B cell (primary cell): ENCODE measurements at regions of chr4 and their contacts with region 1.

Region 1: GRCh38 chr4:121869841-121870656 is at the start of gene BBS7:
- DNase-seq: peak; percentile 96
- ATAC-seq: peak; percentile 98
- H3K4me3 ChIP-seq: peak within 1 kb of the TSS; percentile 70 to 91 (median 80)
- H3K4me3 Mint-ChIP-seq: peak within 1 kb of the TSS; percentile 98
- H3K27ac ChIP-seq: peak within 1 kb of the TSS; percentile 45 to 80
- H3K27ac Mint-ChIP-seq: peak within 1 kb of the TSS; percentile 88
- H3K4me1 ChIP-seq: peaks cover 0 to 10% of the 10 kb centered on the region in 2 donors
- H3K4me1 Mint-ChIP-seq: peaks cover 17% of the 10 kb centered on the region
- H3K27me3 ChIP-seq: peaks cover 0 to 17% (median 4%) of the 10 kb centered on the region in 4 experiments
- H3K27me3 Mint-ChIP-seq: peaks cover 14% of the 10 kb centered on the region
- CTCF ChIP-seq: no peak
- total RNA-seq, gene BBS7: 9.1 and 11.9 TPM in 2 replicates

Region 2: GRCh38 chr4:121614101-121614500 is 255.9 kb before region 1 on chr4:
- CTCF ChIA-PET with region 1: no interaction called
- POLR2A ChIA-PET with region 1: no interaction called
- intact Hi-C with region 1: no loop called
- DNase-seq: no peak
- ATAC-seq: no peak
- H3K4me3 ChIP-seq: no peak overlapping the region
- H3K4me3 Mint-ChIP-seq: no peak overlapping the region
- H3K27ac ChIP-seq: no peak overlapping the region
- H3K27ac Mint-ChIP-seq: no peak overlapping the region
- H3K4me1 ChIP-seq: no peaks in the 10 kb centered on the region
- H3K4me1 Mint-ChIP-seq: no peaks in the 10 kb centered on the region
- H3K27me3 ChIP-seq: no peaks in the 10 kb centered on the region
- H3K27me3 Mint-ChIP-seq: peaks cover 16% of the 10 kb centered on the region
- CTCF ChIP-seq: no peak

Region 3: GRCh38 chr4:121696581-121697461 is 173.2 kb before region 1 on chr4 and contains the start of gene ANXA5:
- CTCF ChIA-PET with region 1: no interaction called
- POLR2A ChIA-PET with region 1: no interaction called
- intact Hi-C with region 1: loop called (anchors 1 kb)
- DNase-seq: peak; percentile 78
- ATAC-seq: peak; percentile 90
- H3K4me3 ChIP-seq: peak within 1 kb of the TSS; percentile 73 to 85 (median 79)
- H3K4me3 Mint-ChIP-seq: peak within 1 kb of the TSS; percentile 99
- H3K27ac ChIP-seq: peak within 1 kb of the TSS; percentile 39 to 69
- H3K27ac Mint-ChIP-seq: peak within 1 kb of the TSS; percentile 98
- H3K4me1 ChIP-seq: peaks cover 13 to 14% of the 10 kb centered on the region in 2 donors
- H3K4me1 Mint-ChIP-seq: peaks cover 36% of the 10 kb centered on the region
- H3K27me3 ChIP-seq: peaks cover 0 to 12% (median 0%) of the 10 kb centered on the region in 4 experiments
- H3K27me3 Mint-ChIP-seq: peaks cover 12% of the 10 kb centered on the region
- CTCF ChIP-seq: no peak
- total RNA-seq, gene ANXA5: 66.5 and 67.8 TPM in 2 replicates

Region 4: GRCh38 chr4:121800961-121801714 is 68.9 kb before region 1 on chr4 and contains the start of gene EXOSC9:
- CTCF ChIA-PET with region 1: no interaction called
- POLR2A ChIA-PET with region 1: no interaction called
- intact Hi-C with region 1: loop called (anchors 1 kb)
- DNase-seq: peak; percentile 97
- ATAC-seq: peak; percentile 76
- H3K4me3 ChIP-seq: peak within 1 kb of the TSS; percentile 64 to 99 (median 93)
- H3K4me3 Mint-ChIP-seq: peak within 1 kb of the TSS; percentile 96
- H3K27ac ChIP-seq: peak within 1 kb of the TSS; percentile 88 to 97
- H3K27ac Mint-ChIP-seq: peak within 1 kb of the TSS; percentile 98
- H3K4me1 ChIP-seq: peaks cover 8 to 15% of the 10 kb centered on the region in 2 donors
- H3K4me1 Mint-ChIP-seq: peaks cover 39% of the 10 kb centered on the region
- H3K27me3 ChIP-seq: no peaks in the 10 kb centered on the region
- H3K27me3 Mint-ChIP-seq: no peaks in the 10 kb centered on the region
- CTCF ChIP-seq: no peak
- total RNA-seq, gene EXOSC9: 35.5 and 42.1 TPM in 2 replicates

Region 5: DNA sequence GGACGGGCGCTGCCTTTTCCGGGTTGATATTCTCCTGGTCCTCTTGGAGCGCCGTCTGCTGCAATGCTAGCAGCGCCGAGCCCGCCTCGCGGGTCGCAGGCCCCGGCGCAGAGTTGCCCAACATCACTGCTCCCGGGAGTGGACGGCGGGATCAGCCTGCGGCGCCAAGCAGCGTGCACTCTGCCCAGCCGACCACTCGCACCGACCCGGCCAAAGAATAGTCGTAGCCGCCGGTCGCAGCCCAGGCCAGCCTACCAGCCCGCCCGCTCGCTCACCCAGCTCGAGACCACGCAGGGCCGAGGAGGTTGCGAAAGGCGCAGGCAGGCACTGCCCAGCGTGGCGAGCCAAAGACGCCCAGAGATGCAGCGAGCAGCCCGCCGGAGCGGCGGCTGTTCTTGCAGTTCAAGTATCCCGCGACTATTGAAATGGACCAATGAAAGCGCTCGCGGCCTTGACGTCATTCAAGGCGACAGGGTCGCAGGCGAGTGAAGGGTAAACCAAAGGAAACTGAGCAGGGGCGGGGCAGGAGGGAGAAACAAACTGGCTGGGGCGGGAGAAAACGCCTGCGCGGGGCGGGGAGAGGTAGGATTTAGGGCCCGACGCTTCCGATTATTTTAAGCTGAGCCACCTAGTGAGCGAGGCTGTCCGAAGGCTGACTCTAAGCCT is 46.4 kb before region 1 on chr4 and contains the start of gene CCNA2:
- CTCF ChIA-PET with region 1: interaction called, 5 read pairs
- POLR2A ChIA-PET with region 1: no interaction called
- intact Hi-C with region 1: loop called (anchors 1 kb)
- DNase-seq: peak; percentile 94
- ATAC-seq: peak; percentile 99
- H3K4me3 ChIP-seq: peak within 1 kb of the TSS; percentile 46 to 96 (median 74)
- H3K4me3 Mint-ChIP-seq: peak within 1 kb of the TSS; percentile 90
- H3K27ac ChIP-seq: peak within 1 kb of the TSS; percentile 62 to 82
- H3K27ac Mint-ChIP-seq: peak within 1 kb of the TSS; percentile 87
- H3K4me1 ChIP-seq: peaks cover 8 to 10% of the 10 kb centered on the region in 2 donors
- H3K4me1 Mint-ChIP-seq: peaks cover 16% of the 10 kb centered on the region
- H3K27me3 ChIP-seq: no peaks in the 10 kb centered on the region
- H3K27me3 Mint-ChIP-seq: no peaks in the 10 kb centered on the region
- CTCF ChIP-seq: no peak
- total RNA-seq, gene CCNA2: 0.94 and 1.8 TPM in 2 replicates

Region 6: GRCh38 chr4:121851354-121851753 is 18.7 kb before region 1 on chr4:
- CTCF ChIA-PET with region 1: no interaction called
- POLR2A ChIA-PET with region 1: no interaction called
- intact Hi-C with region 1: no loop called
- DNase-seq: no peak
- ATAC-seq: no peak
- H3K4me3 ChIP-seq: no peak overlapping the region
- H3K4me3 Mint-ChIP-seq: no peak overlapping the region
- H3K27ac ChIP-seq: no peak overlapping the region
- H3K27ac Mint-ChIP-seq: no peak overlapping the region
- H3K4me1 ChIP-seq: no peaks in the 10 kb centered on the region
- H3K4me1 Mint-ChIP-seq: no peaks in the 10 kb centered on the region
- H3K27me3 ChIP-seq: no peaks in the 10 kb centered on the region
- H3K27me3 Mint-ChIP-seq: no peaks in the 10 kb centered on the region
- CTCF ChIP-seq: no peak

Region 7: GRCh38 chr4:122151982-122152710 is 282.1 kb after region 1 on chr4 and contains the start of gene BLTP1:
- CTCF ChIA-PET with region 1: no interaction called
- POLR2A ChIA-PET with region 1: no interaction called
- intact Hi-C with region 1: loop called (anchors 1 kb)
- DNase-seq: peak; percentile 91
- ATAC-seq: peak; percentile 96
- H3K4me3 ChIP-seq: peak within 1 kb of the TSS; percentile 73 to 89 (median 86)
- H3K4me3 Mint-ChIP-seq: peak within 1 kb of the TSS; percentile 92
- H3K27ac ChIP-seq: peak within 1 kb of the TSS; percentile 73 to 87
- H3K27ac Mint-ChIP-seq: peak within 1 kb of the TSS; percentile 91
- H3K4me1 ChIP-seq: peaks cover 20 to 25% of the 10 kb centered on the region in 2 donors
- H3K4me1 Mint-ChIP-seq: peaks cover 52% of the 10 kb centered on the region
- H3K27me3 ChIP-seq: no peaks in the 10 kb centered on the region
- H3K27me3 Mint-ChIP-seq: peaks cover 3% of the 10 kb centered on the region
- CTCF ChIP-seq: no peak
- total RNA-seq, gene BLTP1: 86.3 and 96.8 TPM in 2 replicates